ENCODE measurements at regions of chr2 and their contacts with region 1.

Region 1: DNA sequence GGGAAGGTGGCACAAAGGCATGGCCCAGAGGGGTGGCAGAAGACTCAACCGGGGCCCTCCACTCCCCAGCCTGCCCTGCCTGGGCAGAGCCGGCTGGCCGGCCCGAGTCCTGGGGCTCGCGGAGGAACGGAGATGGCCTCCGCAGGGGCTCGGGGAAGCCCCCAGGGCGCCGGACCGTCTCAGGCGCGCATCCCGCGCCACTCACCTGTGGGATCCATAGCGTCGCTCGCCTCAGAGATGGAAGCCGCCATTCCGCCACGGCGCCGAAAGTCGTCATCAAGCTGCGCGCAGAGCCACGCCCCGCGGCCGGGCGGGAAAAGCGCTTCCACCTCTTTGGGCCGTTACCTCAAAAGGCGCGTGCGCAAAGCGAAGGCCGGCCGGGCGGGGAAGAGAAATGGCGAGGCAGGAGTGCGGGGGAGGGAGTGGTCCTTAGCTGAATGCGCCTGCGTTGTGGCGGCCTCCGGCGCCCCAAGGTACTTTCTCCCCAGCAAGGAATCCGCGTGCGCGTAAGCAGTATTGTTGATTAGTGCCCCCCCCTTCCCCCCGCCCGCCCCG is at the start of gene SMPD4:
- DNase-seq: peak; percentile 97
- ATAC-seq: peak; percentile 75
- H3K4me3 Mint-ChIP-seq: peak within 1 kb of the TSS; percentile 93
- H3K27ac Mint-ChIP-seq: peak within 1 kb of the TSS; percentile 91
- H3K4me1 Mint-ChIP-seq: peaks cover 31% of the 10 kb centered on the region
- H3K27me3 Mint-ChIP-seq: no peaks in the 10 kb centered on the region
- CTCF ChIP-seq: no peak
- total RNA-seq, gene SMPD4: 58.5 and 66.8 TPM in 2 replicates

Region 2: DNA sequence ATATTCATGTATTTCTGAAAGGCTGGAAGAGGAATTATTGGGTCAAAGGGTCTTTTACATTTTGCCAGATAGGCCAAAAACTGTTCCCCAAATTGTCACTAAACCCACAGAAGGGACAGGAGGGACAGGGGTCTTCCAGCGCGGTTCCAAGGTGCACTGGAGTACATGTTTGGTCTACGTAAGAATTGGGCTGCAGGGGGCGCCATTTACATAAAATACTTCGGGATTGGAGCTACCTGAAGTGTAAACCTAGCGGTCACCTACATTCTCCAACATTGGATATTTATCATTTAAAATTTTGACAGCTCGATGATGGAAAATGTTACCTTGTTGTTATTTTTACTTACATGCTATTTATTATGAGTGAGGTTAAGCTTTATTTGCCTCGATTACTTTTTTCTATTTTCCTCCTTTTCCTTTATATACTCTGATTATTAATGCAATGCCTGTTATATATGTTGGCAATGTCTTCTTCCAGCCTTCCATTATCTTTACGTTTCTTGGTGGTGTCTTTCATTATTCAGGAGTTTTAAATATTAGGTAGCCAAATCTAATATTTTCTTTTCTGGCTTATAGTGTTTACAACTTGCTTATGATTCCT is 245.0 kb before region 1 on chr2:
- CTCF ChIA-PET with region 1: no interaction called
- POLR2A ChIA-PET with region 1: no interaction called
- intact Hi-C with region 1: loop called (anchors 1 kb)
- DNase-seq: peak; percentile 55
- ATAC-seq: peak; percentile 70
- H3K4me3 Mint-ChIP-seq: no peak overlapping the region
- H3K27ac Mint-ChIP-seq: no peak overlapping the region
- H3K4me1 Mint-ChIP-seq: no peaks in the 10 kb centered on the region
- H3K27me3 Mint-ChIP-seq: peaks cover 36% of the 10 kb centered on the region
- CTCF ChIP-seq: peak; percentile 53

Region 3: GRCh38 chr2:130135692-130136541 is 45.5 kb before region 1 on chr2:
- CTCF ChIA-PET with region 1: no interaction called
- POLR2A ChIA-PET with region 1: no interaction called
- intact Hi-C with region 1: no loop called
- DNase-seq: no peak
- ATAC-seq: no peak
- H3K4me3 Mint-ChIP-seq: no peak overlapping the region
- H3K27ac Mint-ChIP-seq: no peak overlapping the region
- H3K4me1 Mint-ChIP-seq: no peaks in the 10 kb centered on the region
- H3K27me3 Mint-ChIP-seq: no peaks in the 10 kb centered on the region
- CTCF ChIP-seq: no peak

Region 4: GRCh38 chr2:130158631-130159030 is 22.8 kb before region 1 on chr2:
- CTCF ChIA-PET with region 1: no interaction called
- POLR2A ChIA-PET with region 1: interaction called, 9 read pairs
- intact Hi-C with region 1: loop called (anchors 1 kb)
- DNase-seq: no peak
- ATAC-seq: no peak
- H3K4me3 Mint-ChIP-seq: no peak overlapping the region
- H3K27ac Mint-ChIP-seq: peak overlapping the region; percentile 90
- H3K4me1 Mint-ChIP-seq: peaks cover 33% of the 10 kb centered on the region
- H3K27me3 Mint-ChIP-seq: no peaks in the 10 kb centered on the region
- CTCF ChIP-seq: no peak

Region 5: DNA sequence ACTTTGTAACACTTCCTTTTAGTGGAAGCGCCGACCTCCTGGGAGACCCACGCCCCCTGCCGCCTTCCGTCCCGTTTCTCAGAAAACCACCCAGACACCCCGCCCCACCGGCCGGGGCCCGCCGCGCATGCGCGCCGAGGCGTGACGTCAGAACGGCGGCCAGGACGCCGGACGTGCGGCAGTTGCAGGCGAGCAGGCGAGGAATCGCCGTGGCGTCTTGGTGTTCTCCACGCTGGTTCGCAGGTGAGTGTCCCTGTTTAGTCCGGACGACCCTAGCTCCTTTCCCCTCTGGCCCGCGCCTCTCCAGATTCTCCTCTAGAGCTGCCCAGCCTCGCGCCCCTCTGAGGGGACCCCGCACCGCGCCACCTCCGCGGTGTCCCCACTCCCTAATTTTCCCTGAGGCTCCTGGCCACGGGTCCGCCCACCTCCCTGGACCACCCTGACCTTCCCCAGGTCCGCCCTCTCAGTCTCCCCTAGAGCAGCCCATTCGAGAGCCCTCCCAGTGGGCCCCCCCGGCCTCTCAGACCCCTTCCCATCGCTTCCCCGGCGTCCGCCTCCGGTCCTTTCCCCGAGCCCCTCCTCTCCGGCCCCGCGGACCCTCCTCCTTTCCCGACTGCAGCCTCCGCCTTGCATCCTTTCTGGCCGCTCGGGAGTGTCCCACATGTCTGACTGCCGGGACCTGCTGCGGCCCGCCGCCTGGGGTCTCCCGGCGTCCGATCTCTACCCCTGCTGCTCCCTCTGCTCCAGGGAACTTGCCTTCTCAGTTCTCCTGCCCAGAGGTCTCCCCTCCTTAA is 924.0 kb after region 1 on chr2 and contains the start of gene PLEKHB2:
- CTCF ChIA-PET with region 1: no interaction called
- POLR2A ChIA-PET with region 1: no interaction called
- intact Hi-C with region 1: loop called (anchors 2 kb)
- DNase-seq: peak; percentile 97
- ATAC-seq: peak; percentile 84
- H3K4me3 Mint-ChIP-seq: peak within 1 kb of the TSS; percentile 96
- H3K27ac Mint-ChIP-seq: peak within 1 kb of the TSS; percentile 91
- H3K4me1 Mint-ChIP-seq: peaks cover 34% of the 10 kb centered on the region
- H3K27me3 Mint-ChIP-seq: no peaks in the 10 kb centered on the region
- CTCF ChIP-seq: no peak
- total RNA-seq, gene PLEKHB2: 32.3 and 33.6 TPM in 2 replicates

Measured in activated B cell treated with CpG ODN at 0.5 μM for 24 hours (primary cell).